Activated naive CD4-positive, alpha-beta T cell treated with anti-CD3 and anti-CD28 coated beads for 36 hours (primary cell): ENCODE measurements at regions of chr17 and their contacts with region 1.

Region 1: GRCh38 chr17:79045842-79046196 is 21.9 kb downstream of the C1QTNF1 start:
- DNase-seq: peak; percentile 77
- H3K4me3 Mint-ChIP-seq: no peak overlapping the region
- H3K27ac Mint-ChIP-seq: no peak overlapping the region
- H3K4me1 Mint-ChIP-seq: no peaks in the 10 kb centered on the region
- H3K27me3 Mint-ChIP-seq: peaks cover 3% of the 10 kb centered on the region

Region 2: GRCh38 chr17:78986048-78986648 is 59.7 kb before region 1 on chr17:
- CTCF ChIA-PET with region 1: interaction called, 4 read pairs
- intact Hi-C with region 1: loop called (anchors 2 kb)
- DNase-seq: no peak
- H3K4me3 Mint-ChIP-seq: peak overlapping the region; percentile 5
- H3K27ac Mint-ChIP-seq: no peak overlapping the region
- H3K4me1 Mint-ChIP-seq: peaks cover 18% of the 10 kb centered on the region
- H3K27me3 Mint-ChIP-seq: no peaks in the 10 kb centered on the region

Region 3: GRCh38 chr17:79019632-79020584 is 25.9 kb before region 1 on chr17:
- CTCF ChIA-PET with region 1: interaction called, 13 read pairs
- intact Hi-C with region 1: loop called (anchors 1 kb)
- DNase-seq: peak; percentile 74
- H3K4me3 Mint-ChIP-seq: no peak overlapping the region
- H3K27ac Mint-ChIP-seq: no peak overlapping the region
- H3K4me1 Mint-ChIP-seq: peaks cover 5% of the 10 kb centered on the region
- H3K27me3 Mint-ChIP-seq: peaks cover 10% of the 10 kb centered on the region

Region 4: GRCh38 chr17:79033732-79034501 is 11.9 kb before region 1 on chr17:
- CTCF ChIA-PET with region 1: interaction called, 13 read pairs
- intact Hi-C with region 1: no loop called
- DNase-seq: no peak
- H3K4me3 Mint-ChIP-seq: no peak overlapping the region
- H3K27ac Mint-ChIP-seq: no peak overlapping the region
- H3K4me1 Mint-ChIP-seq: no peaks in the 10 kb centered on the region
- H3K27me3 Mint-ChIP-seq: peaks cover 3% of the 10 kb centered on the region

Region 5: DNA sequence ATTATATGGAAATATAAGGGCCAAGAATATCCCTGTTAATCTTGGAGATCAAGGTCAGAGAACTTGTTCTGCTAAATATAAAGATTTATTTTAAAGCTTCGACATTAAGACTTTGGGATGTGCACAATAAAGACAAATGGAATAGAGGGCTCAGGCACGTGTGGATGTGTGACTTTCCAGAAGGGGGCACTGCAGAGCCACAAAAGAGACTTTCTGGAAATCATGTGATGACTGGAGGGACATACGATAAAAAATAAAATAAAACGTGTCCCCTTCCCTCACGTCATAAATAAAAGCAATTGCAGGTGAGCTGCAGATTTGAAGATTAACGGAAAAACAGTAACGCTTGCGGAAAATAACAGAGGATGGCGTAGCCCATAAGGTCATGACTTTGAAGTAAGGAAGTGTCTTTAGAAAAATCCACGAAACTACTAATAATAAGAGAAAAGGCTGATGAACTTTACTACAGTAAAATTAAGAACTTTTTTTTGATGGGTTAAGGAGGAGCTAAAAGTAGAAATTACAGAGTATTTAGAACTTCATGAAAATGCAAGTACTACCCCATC is 19.4 kb after region 1 on chr17:
- CTCF ChIA-PET with region 1: interaction called, 10 read pairs
- intact Hi-C with region 1: no loop called
- DNase-seq: peak; percentile 80
- H3K4me3 Mint-ChIP-seq: no peak overlapping the region
- H3K27ac Mint-ChIP-seq: no peak overlapping the region
- H3K4me1 Mint-ChIP-seq: peaks cover 3% of the 10 kb centered on the region
- H3K27me3 Mint-ChIP-seq: no peaks in the 10 kb centered on the region

Region 6: DNA sequence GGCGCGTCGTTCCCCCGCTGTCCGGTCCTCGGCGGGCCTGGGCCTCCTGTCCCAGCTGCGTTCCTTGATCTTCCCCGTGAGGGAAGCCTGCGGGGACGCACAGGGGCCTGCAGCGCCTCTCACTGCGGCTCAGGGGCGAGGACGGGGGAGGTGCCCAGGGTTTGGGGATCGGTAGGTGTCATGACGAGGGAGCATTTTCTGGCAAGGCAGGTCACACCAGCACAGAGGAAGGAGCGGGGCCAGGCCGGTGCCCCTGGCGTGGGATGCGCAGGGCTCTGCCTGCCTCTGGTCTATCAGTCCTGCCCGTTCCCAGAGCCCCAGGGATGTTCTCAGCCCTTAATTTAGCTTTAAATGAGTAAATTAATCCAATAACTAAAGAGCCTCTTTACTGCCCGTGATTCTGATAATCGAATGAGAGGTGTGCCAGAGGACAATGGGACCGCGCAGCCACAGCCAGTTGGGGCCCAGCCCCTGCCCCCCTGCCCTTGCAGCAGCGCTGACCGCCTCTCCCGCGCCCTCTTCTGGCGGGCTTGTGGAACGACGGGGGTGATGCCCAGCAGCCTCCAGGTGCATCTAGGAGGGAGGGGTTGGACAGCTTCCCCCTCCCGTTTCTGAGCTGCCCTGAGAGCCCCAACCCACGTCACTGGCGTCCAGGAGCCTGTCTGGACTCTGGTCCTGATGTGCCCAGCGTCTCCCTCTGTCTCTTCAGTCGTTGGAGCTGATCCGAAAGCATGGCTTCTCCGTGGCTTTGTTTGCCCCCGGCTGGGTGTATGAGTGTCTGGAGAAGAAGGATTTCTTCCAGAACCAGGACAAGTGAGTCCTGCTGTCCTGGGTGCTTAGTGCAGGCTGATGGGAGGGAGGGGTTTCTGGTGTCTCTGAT is 36.7 kb after region 1 on chr17:
- CTCF ChIA-PET with region 1: interaction called, 10 read pairs
- intact Hi-C with region 1: loop called (anchors 2 kb)
- DNase-seq: peak; percentile 64
- H3K4me3 Mint-ChIP-seq: no peak overlapping the region
- H3K27ac Mint-ChIP-seq: no peak overlapping the region
- H3K4me1 Mint-ChIP-seq: peaks cover under 1% of the 10 kb centered on the region
- H3K27me3 Mint-ChIP-seq: no peaks in the 10 kb centered on the region

Region 7: DNA sequence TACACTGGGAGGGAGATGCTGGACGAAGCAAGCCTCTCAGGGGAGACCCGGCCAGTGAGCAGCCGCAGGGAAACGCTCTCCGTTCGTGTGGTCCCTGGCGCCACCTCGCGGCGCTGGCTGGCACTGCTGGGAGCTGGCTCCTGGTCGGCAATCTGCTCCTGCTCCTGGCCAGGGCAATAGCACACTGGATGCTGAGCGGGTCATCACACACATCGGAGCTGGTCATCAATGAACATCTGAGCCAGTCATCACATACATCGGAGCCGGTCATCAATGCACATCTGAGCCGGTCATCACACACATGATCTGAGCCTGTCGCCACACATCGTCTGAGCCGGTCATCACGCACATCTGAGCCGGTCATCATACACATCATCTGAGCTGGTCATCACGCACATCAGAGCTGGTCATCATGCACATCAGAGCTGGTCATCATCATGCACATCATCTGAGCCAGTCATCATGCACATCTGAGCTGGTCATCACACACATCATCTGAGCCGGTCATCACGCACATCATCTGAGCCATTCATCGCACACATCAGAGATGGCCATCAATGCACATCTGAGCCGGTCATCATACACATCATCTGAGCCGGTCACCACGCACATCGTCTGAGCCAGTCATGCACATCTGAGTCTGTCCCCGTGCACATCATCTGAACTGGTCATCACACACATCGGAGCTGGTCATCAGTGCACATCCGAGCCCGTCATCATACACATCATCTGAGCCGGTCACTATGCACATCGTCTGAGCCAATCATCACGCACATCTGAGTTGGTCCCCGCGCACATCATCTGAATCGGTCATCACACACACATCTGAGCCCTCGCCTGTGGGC is 347.8 kb after region 1 on chr17:
- CTCF ChIA-PET with region 1: interaction called, 11 read pairs
- intact Hi-C with region 1: loop called (anchors 1 kb)
- DNase-seq: peak; percentile 80
- H3K4me3 Mint-ChIP-seq: no peak overlapping the region
- H3K27ac Mint-ChIP-seq: no peak overlapping the region
- H3K4me1 Mint-ChIP-seq: peaks cover 3% of the 10 kb centered on the region
- H3K27me3 Mint-ChIP-seq: peaks cover 47% of the 10 kb centered on the region